Heart right ventricle (tissue), 16 donors: ENCODE measurements at regions of chr12 and their contacts with region 1.

Region 1: GRCh38 chr12:77907936-77908335 is 77.2 kb downstream of the NAV3 start:
- DNase-seq: no peak
- ATAC-seq: no peak
- H3K4me3 ChIP-seq: no peak overlapping the region
- H3K27ac ChIP-seq: no peak overlapping the region
- H3K4me1 ChIP-seq: no peaks in the 10 kb centered on the region
- H3K27me3 ChIP-seq: no peaks in the 10 kb centered on the region
- CTCF ChIP-seq: no peak

Region 2: DNA sequence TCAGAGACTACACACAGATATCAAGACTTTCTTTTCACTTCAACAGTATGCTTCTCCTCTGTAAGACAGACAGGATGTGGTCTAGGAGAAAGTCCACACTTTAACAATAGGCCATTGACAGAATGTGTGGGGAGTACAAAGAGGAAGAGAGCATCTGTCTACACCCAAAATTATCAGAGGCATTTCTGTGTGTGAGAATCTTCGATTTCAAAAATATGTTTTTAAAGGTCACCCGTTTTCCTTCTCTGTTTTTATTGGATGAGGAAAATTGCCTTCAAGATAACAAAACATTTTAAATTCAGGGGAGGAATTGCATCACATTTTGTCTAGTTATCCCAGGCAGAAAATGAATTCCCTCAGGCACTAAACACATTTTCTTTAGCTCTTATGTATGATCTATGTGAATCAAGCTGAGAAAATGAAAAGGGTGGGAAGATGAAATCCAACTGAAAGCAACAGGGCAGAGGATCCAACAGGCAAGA is 60.8 kb before region 1 on chr12:
- intact Hi-C with region 1: loop called in 1 of 10 experiments (anchors 10 kb)
- DNase-seq: no peak
- ATAC-seq: peak in 5 of 8 donors; percentile 44 to 72 (median 64)
- H3K4me3 ChIP-seq: no peak overlapping the region
- H3K27ac ChIP-seq: peak overlapping the region in 9 of 10 donors; percentile 39 to 89 (median 73)
- H3K4me1 ChIP-seq: peaks cover 6 to 38% (median 23%) of the 10 kb centered on the region in 9 donors
- H3K27me3 ChIP-seq: no peaks in the 10 kb centered on the region
- CTCF ChIP-seq: no peak